Naive thymus-derived CD4-positive, alpha-beta T cell (primary cell): ENCODE measurements at regions of chr6 and their contacts with region 1.

Region 1: GRCh38 chr6:8063761-8064637 is at the start of gene BLOC1S5:
- DNase-seq: peak; percentile 89 to 99 (median 97)
- ATAC-seq: peak; percentile 98
- H3K4me3 ChIP-seq: peak within 1 kb of the TSS; percentile 89
- H3K4me3 Mint-ChIP-seq: peak within 1 kb of the TSS; percentile 91 to 98 (median 95)
- H3K27ac ChIP-seq: peak within 1 kb of the TSS; percentile 92
- H3K27ac Mint-ChIP-seq: peak within 1 kb of the TSS; percentile 91 to 97 (median 95)
- H3K4me1 ChIP-seq: peaks cover 10% of the 10 kb centered on the region in 2 donors
- H3K4me1 Mint-ChIP-seq: peaks cover 9 to 38% (median 28%) of the 10 kb centered on the region in 7 donors
- H3K27me3 ChIP-seq: no peaks in the 10 kb centered on the region
- H3K27me3 Mint-ChIP-seq: no peaks in the 10 kb centered on the region
- total RNA-seq, gene BLOC1S5: 9.6 to 26.2 (median 22.6) TPM

Region 2: GRCh38 chr6:7312616-7313504 is 751.1 kb before region 1 on chr6 and contains the start of gene SSR1:
- CTCF ChIA-PET with region 1: no interaction called
- POLR2A ChIA-PET with region 1: interaction called, 4 read pairs
- intact Hi-C with region 1: loop called (anchors 1 kb)
- DNase-seq: peak; percentile 76 to 97 (median 84)
- ATAC-seq: peak; percentile 99
- H3K4me3 ChIP-seq: peak within 1 kb of the TSS; percentile 66
- H3K4me3 Mint-ChIP-seq: peak within 1 kb of the TSS; percentile 83 to 99 (median 94)
- H3K27ac ChIP-seq: peak within 1 kb of the TSS; percentile 76
- H3K27ac Mint-ChIP-seq: peak within 1 kb of the TSS; percentile 87 to 93 (median 92)
- H3K4me1 ChIP-seq: peaks cover 6 to 27% of the 10 kb centered on the region in 2 donors
- H3K4me1 Mint-ChIP-seq: peaks cover 31 to 65% (median 50%) of the 10 kb centered on the region in 7 donors
- H3K27me3 ChIP-seq: no peaks in the 10 kb centered on the region
- H3K27me3 Mint-ChIP-seq: no peaks in the 10 kb centered on the region
- total RNA-seq, gene SSR1: 75.0 to 178 (median 127) TPM

Region 3: DNA sequence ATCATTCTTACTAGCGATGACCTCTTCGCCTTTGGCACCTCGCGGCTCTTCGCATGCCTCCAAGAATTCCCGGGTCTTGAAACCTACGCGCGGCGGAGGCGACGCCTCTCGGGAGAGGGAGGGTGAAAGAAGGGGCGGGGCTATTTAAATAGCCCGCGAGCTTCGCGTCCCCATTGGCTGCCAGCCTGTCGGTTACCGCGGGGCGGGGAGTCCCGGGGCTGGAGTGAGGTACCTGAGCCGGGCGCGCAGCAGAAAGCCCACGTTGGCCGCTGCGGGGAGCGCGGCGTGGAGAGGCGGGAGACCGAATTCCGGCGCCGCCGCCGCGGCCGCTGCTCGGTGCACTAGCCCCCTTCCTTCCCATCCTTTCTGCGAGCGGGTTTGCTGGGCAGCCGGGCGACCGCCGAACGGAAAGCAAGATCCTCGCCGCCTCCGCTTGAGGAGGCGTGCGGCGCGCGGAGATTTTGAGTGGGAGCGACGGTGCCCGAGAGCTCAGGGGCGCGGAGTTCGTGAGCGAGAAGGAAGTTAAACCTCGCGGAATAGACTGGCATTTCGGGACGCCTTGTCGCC is 338.1 kb before region 1 on chr6 and contains the start of gene BMP6:
- CTCF ChIA-PET with region 1: interaction called, 4 read pairs
- POLR2A ChIA-PET with region 1: no interaction called
- intact Hi-C with region 1: loop called in 1 of 2 experiments (anchors 1 kb)
- DNase-seq: peak in 7 of 9 donors; percentile 10 to 73 (median 24)
- ATAC-seq: peak; percentile 79
- H3K4me3 ChIP-seq: peak within 1 kb of the TSS; percentile 20
- H3K4me3 Mint-ChIP-seq: peak within 1 kb of the TSS; percentile 58 to 90 (median 79)
- H3K27ac ChIP-seq: no peak within 1 kb of the TSS
- H3K27ac Mint-ChIP-seq: no peak within 1 kb of the TSS
- H3K4me1 ChIP-seq: peaks cover 0 to 7% of the 10 kb centered on the region in 2 donors
- H3K4me1 Mint-ChIP-seq: peaks cover 13 to 24% (median 22%) of the 10 kb centered on the region in 7 donors
- H3K27me3 ChIP-seq: peaks cover 8 to 20% of the 10 kb centered on the region in 2 donors
- H3K27me3 Mint-ChIP-seq: peaks cover 61 to 78% (median 62%) of the 10 kb centered on the region in 5 donors
- total RNA-seq, gene BMP6: 0.37 to 0.56 TPM in 2 of 5 experiments, not detected in the others

Region 4: GRCh38 chr6:7910654-7911344 is 153.2 kb before region 1 on chr6 and contains the start of gene TXNDC5:
- CTCF ChIA-PET with region 1: interaction called, 4 read pairs
- POLR2A ChIA-PET with region 1: interaction called, 3 read pairs
- intact Hi-C with region 1: loop called (anchors 1 kb)
- DNase-seq: peak; percentile 35 to 82 (median 55)
- ATAC-seq: peak; percentile 91
- H3K4me3 ChIP-seq: peak within 1 kb of the TSS; percentile 76
- H3K4me3 Mint-ChIP-seq: peak within 1 kb of the TSS in 9 of 10 donors; percentile 68 to 89 (median 78)
- H3K27ac ChIP-seq: peak within 1 kb of the TSS; percentile 46
- H3K27ac Mint-ChIP-seq: peak within 1 kb of the TSS in 5 of 9 donors; percentile 3 to 76 (median 27)
- H3K4me1 ChIP-seq: peaks cover 6 to 16% of the 10 kb centered on the region in 2 donors
- H3K4me1 Mint-ChIP-seq: peaks cover 4 to 18% (median 6%) of the 10 kb centered on the region in 7 donors
- H3K27me3 ChIP-seq: no peaks in the 10 kb centered on the region
- H3K27me3 Mint-ChIP-seq: no peaks in the 10 kb centered on the region
- total RNA-seq, gene TXNDC5: 11.5 to 48.6 (median 34.8) TPM

Region 5: DNA sequence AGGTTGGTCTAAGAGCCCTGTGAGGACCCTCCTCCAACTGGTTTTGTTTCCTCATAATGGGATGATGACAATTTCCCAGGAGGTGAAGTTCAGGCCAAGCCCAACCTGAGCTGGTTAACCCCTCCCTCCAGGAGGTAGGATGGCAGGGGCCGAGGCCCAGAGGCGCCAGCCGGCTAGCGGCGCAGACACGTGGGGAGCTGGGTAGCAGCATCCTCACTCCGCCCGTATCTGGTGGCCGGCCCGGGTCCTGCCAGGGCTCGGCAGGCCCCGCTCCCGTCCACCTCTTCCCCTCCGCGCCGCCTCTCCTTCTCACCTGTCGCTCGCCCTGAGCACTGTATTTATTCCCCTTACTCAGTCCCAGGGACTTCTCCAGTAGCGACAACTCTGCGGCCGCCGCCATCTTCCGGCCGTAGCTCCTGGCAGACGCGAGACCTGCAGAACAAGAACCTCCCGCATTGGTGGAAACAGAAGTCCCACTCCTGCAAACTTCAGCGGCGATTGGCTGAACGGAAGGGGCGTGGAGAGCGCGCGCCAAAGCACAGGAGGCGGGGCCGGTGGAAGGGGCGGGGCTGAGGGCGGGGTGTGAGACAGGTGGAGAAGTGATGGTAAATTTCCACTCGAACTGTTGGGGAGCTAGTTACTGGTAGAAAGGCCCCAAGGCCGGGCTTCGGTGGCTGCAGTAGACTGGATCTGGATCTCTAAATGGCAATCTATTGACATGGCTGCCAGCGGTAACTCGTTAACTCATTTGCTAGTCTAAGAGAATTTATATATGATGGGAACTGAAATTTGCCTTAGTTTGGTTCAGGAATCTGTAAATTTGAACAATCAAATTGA is 38.3 kb after region 1 on chr6 and contains the start of gene EEF1E1:
- CTCF ChIA-PET with region 1: interaction called, 6 read pairs
- POLR2A ChIA-PET with region 1: interaction called, 30 read pairs
- intact Hi-C with region 1: loop called (anchors 1 kb)
- DNase-seq: peak; percentile 77 to 97 (median 92)
- ATAC-seq: peak; percentile 100
- H3K4me3 ChIP-seq: peak within 1 kb of the TSS; percentile 75
- H3K4me3 Mint-ChIP-seq: peak within 1 kb of the TSS; percentile 85 to 100 (median 98)
- H3K27ac ChIP-seq: peak within 1 kb of the TSS; percentile 78
- H3K27ac Mint-ChIP-seq: peak within 1 kb of the TSS; percentile 91 to 99 (median 95)
- H3K4me1 ChIP-seq: peaks cover 6 to 8% of the 10 kb centered on the region in 2 donors
- H3K4me1 Mint-ChIP-seq: peaks cover 21 to 43% (median 34%) of the 10 kb centered on the region in 7 donors
- H3K27me3 ChIP-seq: no peaks in the 10 kb centered on the region
- H3K27me3 Mint-ChIP-seq: peaks cover 13 to 27% (median 18%) of the 10 kb centered on the region in 5 donors
- total RNA-seq, gene EEF1E1: 10.2 to 41.0 (median 21.0) TPM